Activated naive CD4-positive, alpha-beta T cell treated with anti-CD3 and anti-CD28 coated beads for 36 hours (primary cell): ENCODE measurements at regions of chr1 and their contacts with region 1.

Region 1: DNA sequence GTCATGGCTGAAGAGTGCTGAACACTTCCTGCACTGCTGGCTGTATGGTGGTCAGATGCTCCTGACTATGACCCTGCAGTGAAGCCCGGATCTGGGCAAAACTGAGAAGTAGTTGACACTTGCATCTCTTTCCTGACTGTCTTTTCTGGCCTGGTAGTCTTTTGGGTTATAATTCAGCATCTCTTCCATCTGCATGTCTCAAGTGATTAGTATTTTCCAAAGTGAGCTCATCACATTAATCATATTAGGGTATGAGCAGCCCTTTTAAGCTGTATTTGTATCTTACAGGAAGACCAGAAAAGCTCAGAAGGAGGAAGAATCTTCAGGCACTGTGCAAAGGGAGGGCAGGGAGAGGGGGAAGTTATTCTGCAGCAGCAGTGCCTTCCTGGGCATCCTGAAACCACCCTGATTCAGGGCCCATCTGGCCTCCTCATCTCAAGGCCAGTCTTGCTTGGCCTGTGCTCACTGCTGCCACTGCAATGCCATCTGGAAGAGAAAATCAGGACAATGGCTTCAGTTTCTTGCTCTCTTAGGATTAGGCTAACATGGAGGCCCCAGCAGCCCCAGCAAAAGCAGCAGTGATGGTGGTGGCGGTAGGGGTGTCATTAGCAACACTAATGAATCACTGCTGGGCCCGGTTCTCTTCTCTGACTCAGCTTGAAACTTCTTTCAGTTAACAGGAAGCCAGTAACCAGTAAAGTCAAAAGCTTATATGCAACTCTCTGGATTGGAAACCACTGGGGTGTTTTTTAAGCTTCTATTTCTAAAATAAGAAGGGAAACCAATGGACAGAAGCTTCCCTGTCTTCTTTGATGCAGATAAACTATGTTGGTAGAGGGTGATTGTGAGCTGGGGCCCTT is 63.3 kb upstream of the WDR26 start:
- DNase-seq: peak; percentile 91
- H3K4me3 Mint-ChIP-seq: peak overlapping the region; percentile 54
- H3K27ac Mint-ChIP-seq: peak overlapping the region; percentile 92
- H3K4me1 Mint-ChIP-seq: peaks cover 40% of the 10 kb centered on the region
- H3K27me3 Mint-ChIP-seq: peaks cover 7% of the 10 kb centered on the region

Region 2: DNA sequence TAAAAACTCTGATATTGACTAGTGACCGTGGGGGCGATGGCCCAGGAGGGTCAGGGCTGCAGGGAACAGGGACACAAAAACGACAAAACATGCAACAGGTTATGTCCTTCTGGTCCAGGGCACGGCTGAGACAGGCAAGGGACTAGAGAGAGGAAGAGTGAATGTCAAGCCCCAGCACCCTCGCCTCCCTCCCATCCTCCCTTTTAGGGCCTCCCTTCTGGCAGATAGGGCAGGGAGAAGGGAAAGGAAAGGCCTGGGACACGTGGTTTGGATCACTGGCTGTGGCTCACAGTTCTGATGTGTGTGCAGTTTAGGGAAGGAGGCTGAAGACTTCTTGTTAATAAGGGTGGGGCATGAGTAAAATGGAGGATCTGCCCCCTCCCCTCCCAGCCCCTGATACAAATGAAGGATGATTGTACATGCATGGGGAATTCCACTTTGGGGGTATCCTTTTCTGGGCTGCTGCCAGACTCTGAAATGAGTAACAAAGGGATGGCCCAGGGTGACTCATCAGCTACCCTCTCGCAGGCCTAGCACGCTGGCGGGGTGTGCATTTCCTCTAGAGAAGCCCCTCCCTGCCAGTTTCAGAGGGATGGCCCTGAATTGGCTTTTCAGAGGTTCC is 771.5 kb before region 1 on chr1:
- CTCF ChIA-PET with region 1: no interaction called
- intact Hi-C with region 1: loop called (anchors 5 kb)
- DNase-seq: peak; percentile 98
- H3K4me3 Mint-ChIP-seq: peak overlapping the region; percentile 52
- H3K27ac Mint-ChIP-seq: peak overlapping the region; percentile 65
- H3K4me1 Mint-ChIP-seq: peaks cover 57% of the 10 kb centered on the region
- H3K27me3 Mint-ChIP-seq: no peaks in the 10 kb centered on the region

Region 3: GRCh38 chr1:223831755-223832636 is 665.9 kb before region 1 on chr1:
- CTCF ChIA-PET with region 1: no interaction called
- intact Hi-C with region 1: loop called (anchors 1 kb)
- DNase-seq: peak; percentile 14
- H3K4me3 Mint-ChIP-seq: peak overlapping the region; percentile 28
- H3K27ac Mint-ChIP-seq: peak overlapping the region; percentile 93
- H3K4me1 Mint-ChIP-seq: peaks cover 28% of the 10 kb centered on the region
- H3K27me3 Mint-ChIP-seq: no peaks in the 10 kb centered on the region

Region 4: GRCh38 chr1:224168859-224169380 is 329.0 kb before region 1 on chr1:
- CTCF ChIA-PET with region 1: no interaction called
- intact Hi-C with region 1: loop called (anchors 1 kb)
- DNase-seq: peak; percentile 60
- H3K4me3 Mint-ChIP-seq: no peak overlapping the region
- H3K27ac Mint-ChIP-seq: peak overlapping the region; percentile 9
- H3K4me1 Mint-ChIP-seq: peaks cover 32% of the 10 kb centered on the region
- H3K27me3 Mint-ChIP-seq: no peaks in the 10 kb centered on the region

Region 5: DNA sequence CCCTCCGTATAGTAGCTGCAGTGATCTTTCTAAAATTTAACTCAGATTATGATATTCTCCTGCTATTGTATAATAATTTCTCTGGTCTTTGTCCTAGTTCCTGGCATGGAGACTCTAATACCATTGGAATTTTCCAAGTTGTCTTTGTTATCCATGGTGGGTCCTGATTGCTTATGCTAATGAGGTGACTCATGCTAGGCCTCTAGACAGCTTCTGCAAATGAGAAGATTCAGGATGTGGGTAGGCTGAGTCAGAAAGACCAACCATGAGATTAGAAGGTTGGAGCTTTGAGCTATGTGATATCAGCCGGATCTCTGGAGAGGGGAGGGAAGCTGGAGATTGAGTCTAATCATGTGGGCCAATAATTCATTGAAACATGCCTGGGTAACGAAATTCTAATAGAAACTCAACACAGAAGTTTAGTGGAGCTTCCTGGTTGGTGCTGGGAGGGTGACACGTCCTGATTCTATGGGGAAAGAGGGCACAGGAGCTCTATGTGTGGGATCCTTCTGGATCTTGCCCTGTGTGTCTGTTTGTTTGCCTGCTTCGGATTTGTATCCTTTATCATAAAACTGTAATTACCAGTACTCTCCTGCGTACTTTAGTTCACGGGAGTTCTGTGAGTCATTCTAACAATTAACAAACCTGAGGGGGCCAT is 45.0 kb after region 1 on chr1:
- CTCF ChIA-PET with region 1: no interaction called
- intact Hi-C with region 1: loop called (anchors 2 kb)
- DNase-seq: peak; percentile 50
- H3K4me3 Mint-ChIP-seq: no peak overlapping the region
- H3K27ac Mint-ChIP-seq: no peak overlapping the region
- H3K4me1 Mint-ChIP-seq: peaks cover 16% of the 10 kb centered on the region
- H3K27me3 Mint-ChIP-seq: no peaks in the 10 kb centered on the region

Region 6: GRCh38 chr1:224623743-224624333 is 125.9 kb after region 1 on chr1:
- CTCF ChIA-PET with region 1: no interaction called
- intact Hi-C with region 1: loop called (anchors 1 kb)
- DNase-seq: peak; percentile 92
- H3K4me3 Mint-ChIP-seq: peak overlapping the region; percentile 46
- H3K27ac Mint-ChIP-seq: peak overlapping the region; percentile 82
- H3K4me1 Mint-ChIP-seq: peaks cover 23% of the 10 kb centered on the region
- H3K27me3 Mint-ChIP-seq: peaks cover 25% of the 10 kb centered on the region

Region 7: GRCh38 chr1:224736619-224737352 is 238.8 kb after region 1 on chr1:
- CTCF ChIA-PET with region 1: no interaction called
- intact Hi-C with region 1: loop called (anchors 5 kb)
- DNase-seq: peak; percentile 36
- H3K4me3 Mint-ChIP-seq: no peak overlapping the region
- H3K27ac Mint-ChIP-seq: no peak overlapping the region
- H3K4me1 Mint-ChIP-seq: peaks cover 26% of the 10 kb centered on the region
- H3K27me3 Mint-ChIP-seq: no peaks in the 10 kb centered on the region